Activated T-helper 1 cell treated with anti-CD3 and anti-CD28 coated beads, Interleukin-12 subunit alpha, Interleukin-12 subunit beta, Interleukin-2, Interleukin-4 antibody, amounts not matched to agents 30 ng/mL and 10 ng/mL and 1 ng/mL, durations not matched to agents 14 hours and 24 hours and 36 hours (primary cell): ENCODE measurements at regions of chr16 and their contacts with region 1.

Region 1: DNA sequence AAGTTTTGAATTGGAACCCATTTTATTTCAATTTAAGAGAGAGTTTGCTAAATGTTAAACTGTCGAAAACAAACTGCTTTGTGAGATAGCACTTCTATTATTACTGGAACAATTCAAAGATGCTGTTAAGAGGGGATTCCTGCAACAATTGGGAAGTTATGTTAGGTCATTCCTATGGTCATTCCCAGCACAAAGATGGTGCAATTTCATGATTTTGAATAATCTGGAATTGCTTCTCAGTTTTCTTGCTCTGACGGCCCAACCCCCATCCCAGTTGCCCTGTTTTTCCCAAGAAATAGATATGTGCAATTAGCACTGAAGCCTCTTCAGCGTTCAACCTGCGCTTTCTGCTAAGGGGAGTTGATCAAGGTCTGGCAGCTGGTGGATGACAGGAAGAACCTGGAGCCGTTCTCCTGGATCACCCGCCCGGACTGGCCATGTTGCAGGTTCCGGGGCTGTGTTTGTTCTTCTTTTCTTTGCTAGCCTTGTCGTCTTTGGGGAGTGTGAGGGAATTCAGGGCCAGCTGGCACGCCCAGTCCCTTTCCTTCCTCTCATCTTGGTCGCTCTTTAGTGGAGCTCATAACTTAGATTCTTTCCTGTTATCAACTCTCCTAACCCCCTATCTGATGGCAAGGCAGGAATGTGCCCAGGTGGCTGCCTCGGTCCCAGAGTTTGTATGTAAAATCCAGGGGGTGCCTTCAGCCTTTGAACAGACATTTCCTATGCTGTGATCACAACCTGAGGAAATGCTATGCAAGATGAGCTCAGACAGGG is 29.0 kb upstream of the IRF8 start:
- DNase-seq: no peak
- H3K4me3 Mint-ChIP-seq: no peak overlapping the region
- H3K27ac Mint-ChIP-seq: peak overlapping the region; percentile 31
- H3K4me1 Mint-ChIP-seq: peaks cover 28% of the 10 kb centered on the region
- H3K27me3 Mint-ChIP-seq: peaks cover 29% of the 10 kb centered on the region

Region 2: DNA sequence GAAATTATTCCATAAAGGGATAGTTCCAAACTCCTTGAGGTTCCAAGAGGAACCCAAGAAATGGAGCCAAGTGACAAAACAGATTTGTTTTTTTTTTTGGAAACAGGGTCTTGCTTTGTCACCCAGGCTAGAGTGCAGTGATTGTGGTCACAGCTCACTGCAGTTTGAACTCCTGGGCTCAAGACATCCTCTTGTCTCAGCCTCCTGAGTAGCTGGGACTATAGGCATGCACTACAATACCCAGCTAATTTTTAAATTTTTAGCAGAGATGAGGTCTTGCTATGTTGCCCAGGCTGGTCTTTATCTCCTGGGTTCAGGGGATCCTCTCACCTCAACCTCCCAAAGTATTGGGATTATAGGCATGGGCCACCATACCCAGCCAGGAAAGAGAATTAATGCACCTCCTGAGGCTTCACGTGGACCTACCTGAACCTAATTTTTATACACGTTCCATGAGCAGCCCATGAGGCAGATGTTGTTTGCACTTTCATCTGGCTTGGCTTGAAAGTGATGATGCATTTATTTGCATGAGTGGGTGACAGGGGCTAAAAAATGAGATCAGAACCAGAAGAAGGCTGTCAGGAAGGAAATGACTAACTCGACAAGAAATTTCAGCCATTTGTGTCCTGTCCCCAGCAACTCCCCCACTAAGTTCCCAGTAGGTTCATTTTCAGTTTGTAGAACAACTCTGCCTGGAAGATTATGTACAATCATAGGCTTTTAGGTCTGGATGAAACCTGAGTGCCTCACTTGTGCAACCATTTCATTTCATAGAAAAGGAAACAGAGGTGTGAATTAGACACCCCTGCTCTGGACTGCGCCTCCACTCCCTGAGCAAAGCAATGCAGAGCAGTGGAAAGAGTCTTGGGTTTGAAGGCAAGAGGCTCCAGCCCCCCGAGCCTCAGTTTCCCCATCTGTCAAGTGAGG is 18.7 kb after region 1 on chr16:
- intact Hi-C with region 1: loop called (anchors 1 kb)
- DNase-seq: peak; percentile 18
- H3K4me3 Mint-ChIP-seq: peak overlapping the region; percentile 43
- H3K27ac Mint-ChIP-seq: peak overlapping the region; percentile 67
- H3K4me1 Mint-ChIP-seq: peaks cover 38% of the 10 kb centered on the region
- H3K27me3 Mint-ChIP-seq: peaks cover 21% of the 10 kb centered on the region

Region 3: DNA sequence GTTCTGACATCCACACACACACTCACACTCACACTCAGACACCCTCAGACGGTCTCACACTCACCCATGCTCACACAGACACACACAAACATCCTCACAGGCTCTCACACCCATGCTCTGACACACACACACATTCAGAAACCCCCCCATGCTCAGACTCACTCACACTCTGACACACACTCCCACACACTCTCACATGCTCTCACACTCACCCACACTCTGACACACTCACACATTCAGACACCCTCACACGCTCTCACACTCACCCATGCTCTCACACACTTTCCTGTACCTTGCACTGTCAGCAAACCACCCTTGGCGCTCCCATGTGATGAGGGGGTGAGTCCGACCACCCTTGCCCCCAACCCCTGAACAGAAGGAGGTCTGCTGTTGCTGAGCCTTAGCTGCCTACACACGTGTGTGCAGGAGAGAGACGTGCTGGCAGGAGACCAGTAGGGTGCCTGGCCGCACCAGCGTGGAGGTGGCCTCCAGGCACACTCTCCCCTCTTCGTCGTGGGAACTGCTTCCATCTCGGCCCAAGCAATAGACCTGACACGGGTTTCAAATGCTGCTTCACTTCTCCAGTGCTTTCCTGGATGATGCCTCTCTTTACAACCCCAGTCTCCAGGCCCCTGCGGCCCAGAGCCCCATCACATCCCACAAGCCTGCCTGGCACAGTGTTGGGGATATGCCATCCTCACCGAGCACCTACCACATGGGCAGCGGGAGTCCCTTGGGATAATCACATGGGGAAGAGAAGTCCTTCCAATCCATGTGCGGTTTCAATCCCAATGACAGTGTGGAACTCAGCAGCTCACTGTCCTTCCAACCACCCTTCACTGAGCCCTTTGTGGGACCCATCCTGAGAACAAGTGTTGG is 372.5 kb after region 1 on chr16:
- intact Hi-C with region 1: no loop called
- DNase-seq: no peak
- H3K4me3 Mint-ChIP-seq: no peak overlapping the region
- H3K27ac Mint-ChIP-seq: no peak overlapping the region
- H3K4me1 Mint-ChIP-seq: no peaks in the 10 kb centered on the region
- H3K27me3 Mint-ChIP-seq: no peaks in the 10 kb centered on the region